Naive thymus-derived CD8-positive, alpha-beta T cell (primary cell): ENCODE measurements at regions of chr14 and their contacts with region 1.

Region 1: DNA sequence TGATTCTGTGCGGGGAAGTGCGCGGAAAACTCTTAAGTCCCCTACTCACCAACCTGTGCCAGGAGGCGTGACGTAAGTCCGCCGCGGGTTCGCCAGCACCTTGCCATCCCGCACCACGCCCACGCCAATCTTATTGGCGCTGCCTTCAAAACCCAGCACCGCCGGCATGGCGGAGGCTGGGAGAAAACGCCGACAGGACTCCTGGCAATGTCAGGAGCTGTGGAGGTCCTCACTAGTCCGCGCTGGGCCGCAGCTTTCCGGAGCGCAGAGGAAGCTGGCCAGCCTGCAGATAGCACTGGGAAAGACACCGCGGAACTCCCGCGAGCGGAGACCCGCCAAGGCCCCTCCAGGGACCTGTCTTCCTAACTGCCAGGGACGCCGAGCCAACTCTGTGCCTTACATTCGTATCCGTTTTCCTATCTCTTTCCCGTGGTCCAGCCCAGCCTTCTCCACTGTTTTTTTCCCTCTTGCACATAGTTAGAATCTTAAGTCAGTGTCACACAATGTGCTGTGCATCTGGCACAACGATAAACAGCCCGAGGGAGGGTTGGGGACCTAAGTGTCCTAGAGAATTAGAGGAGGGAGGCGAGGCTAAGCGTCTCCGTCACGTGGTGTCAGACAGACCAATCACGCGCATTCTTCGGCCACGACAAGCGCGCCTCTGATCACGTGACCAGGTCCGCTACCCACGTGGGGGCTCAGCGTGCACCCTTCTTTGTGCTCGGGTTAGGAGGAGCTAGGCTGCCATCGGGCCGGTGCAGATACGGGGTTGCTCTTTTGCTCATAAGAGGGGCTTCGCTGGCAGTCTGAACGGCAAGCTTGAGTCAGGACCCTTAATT is at the starts of genes APEX1 and OSGEP:
- DNase-seq: peak; percentile 87 to 99 (median 98)
- ATAC-seq: peak; percentile 82 to 83
- H3K4me3 Mint-ChIP-seq: peak within 1 kb of the TSS in 4 of 10 donors; percentile 4 to 30 (median 12)
- H3K27ac Mint-ChIP-seq: peak within 1 kb of the TSS in 2 of 10 donors; percentile 9 to 59
- H3K4me1 Mint-ChIP-seq: peaks cover 15 to 34% (median 26%) of the 10 kb centered on the region in 4 donors
- H3K27me3 Mint-ChIP-seq: no peaks in the 10 kb centered on the region
- polyA plus RNA-seq, gene APEX1: 125 to 176 (median 148) TPM
- polyA plus RNA-seq, gene OSGEP: 38.8 to 43.3 (median 42.0) TPM

Region 2: DNA sequence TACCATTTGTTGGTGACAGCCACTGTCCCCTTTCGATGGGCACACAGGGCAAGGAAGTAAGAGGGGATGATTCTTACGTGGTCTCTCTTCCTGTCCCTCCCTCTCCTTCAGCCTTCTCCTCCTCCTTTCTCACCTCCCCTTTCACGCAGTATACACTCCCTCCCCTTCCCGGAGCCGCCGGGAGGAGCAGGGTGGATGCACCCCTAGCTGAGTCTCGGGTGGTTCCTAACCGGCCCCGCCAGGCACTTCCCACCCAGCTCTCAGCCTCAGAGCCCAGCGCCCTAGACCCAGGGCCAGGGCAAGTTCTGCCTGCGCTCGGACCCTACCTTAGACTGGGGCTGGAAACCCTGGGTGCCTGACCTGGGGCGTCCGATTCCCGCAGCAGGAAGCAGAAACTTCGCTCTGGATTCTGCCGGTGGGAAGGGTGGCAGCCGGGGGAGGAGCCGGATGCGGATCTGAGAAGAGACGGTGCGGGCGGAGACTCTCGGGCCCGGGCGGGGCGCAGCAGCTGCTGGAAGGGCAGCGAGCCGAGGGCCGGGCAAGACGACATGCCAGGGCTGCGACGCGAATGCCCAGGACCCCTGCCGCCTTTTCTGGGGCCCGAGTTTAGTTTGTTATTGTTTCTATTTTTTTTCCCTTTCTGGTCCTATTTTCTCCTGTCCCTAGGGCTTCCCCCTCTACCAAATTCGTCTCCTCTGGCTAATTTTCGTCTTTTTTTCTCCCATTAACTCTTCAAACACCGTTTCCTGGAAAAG is 41.5 kb before region 1 on chr14 and contains the start of gene TEP1:
- POLR2A ChIA-PET with region 1: interaction called, 44 read pairs
- DNase-seq: peak; percentile 45 to 79 (median 64)
- ATAC-seq: peak; percentile 69 to 84
- H3K4me3 Mint-ChIP-seq: peak within 1 kb of the TSS; percentile 90 to 100 (median 96)
- H3K27ac Mint-ChIP-seq: peak within 1 kb of the TSS; percentile 84 to 99 (median 96)
- H3K4me1 Mint-ChIP-seq: peaks cover 22 to 63% (median 47%) of the 10 kb centered on the region in 4 donors
- H3K27me3 Mint-ChIP-seq: no peaks in the 10 kb centered on the region
- polyA plus RNA-seq, gene TEP1: 3.0 to 4.9 (median 4.5) TPM

Region 3: GRCh38 chr14:20427231-20428009 is 27.3 kb before region 1 on chr14:
- POLR2A ChIA-PET with region 1: interaction called, 23 read pairs
- DNase-seq: peak in 2 of 10 donors; percentile 21 to 32
- ATAC-seq: peak; percentile 38 to 62
- H3K4me3 Mint-ChIP-seq: peak overlapping the region; percentile 45 to 80 (median 79)
- H3K27ac Mint-ChIP-seq: peak overlapping the region; percentile 88 to 95 (median 93)
- H3K4me1 Mint-ChIP-seq: peaks cover 24 to 50% (median 46%) of the 10 kb centered on the region in 4 donors
- H3K27me3 Mint-ChIP-seq: no peaks in the 10 kb centered on the region

Region 4: GRCh38 chr14:20440882-20441281 is 13.9 kb before region 1 on chr14:
- POLR2A ChIA-PET with region 1: interaction called, 21 read pairs
- DNase-seq: peak in 9 of 10 donors; percentile 12 to 79 (median 47)
- ATAC-seq: peak; percentile 96 to 98
- H3K4me3 Mint-ChIP-seq: peak overlapping the region; percentile 70 to 87 (median 82)
- H3K27ac Mint-ChIP-seq: peak overlapping the region; percentile 88 to 98 (median 94)
- H3K4me1 Mint-ChIP-seq: peaks cover 22 to 44% (median 31%) of the 10 kb centered on the region in 4 donors
- H3K27me3 Mint-ChIP-seq: no peaks in the 10 kb centered on the region

Region 5: DNA sequence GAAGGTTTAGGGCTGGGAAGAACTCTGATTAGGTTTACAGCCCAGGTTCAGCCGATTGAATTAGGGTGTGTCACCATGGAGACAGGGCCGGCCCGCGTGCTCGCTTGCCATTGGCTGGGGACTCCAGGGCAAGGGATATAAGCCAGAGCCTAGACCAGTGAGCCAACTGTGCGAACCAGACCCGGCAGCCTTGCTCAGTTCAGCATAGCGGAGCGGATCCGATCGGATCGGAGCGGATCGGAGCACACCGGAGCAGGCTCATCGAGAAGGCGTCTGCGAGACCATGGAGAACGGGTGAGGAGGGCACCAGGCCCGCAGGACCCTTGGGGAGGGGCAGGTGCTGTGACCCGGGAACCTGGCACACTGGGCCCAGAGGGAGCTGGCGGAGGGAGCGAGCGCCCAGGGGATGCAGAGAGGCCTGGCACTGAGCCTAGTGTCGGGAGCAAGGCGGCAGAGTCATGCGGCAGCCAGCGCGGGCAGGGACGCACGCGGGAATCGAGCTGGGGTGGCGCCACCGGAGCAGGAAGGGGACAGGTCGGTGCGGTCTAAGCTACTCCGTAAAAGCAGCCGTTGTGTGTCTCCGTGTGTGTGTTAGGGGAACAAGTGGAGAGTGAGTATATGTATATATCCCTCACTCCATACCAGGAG is 14.6 kb after region 1 on chr14 and contains the start of gene PNP:
- POLR2A ChIA-PET with region 1: interaction called, 30 read pairs
- DNase-seq: peak; percentile 72 to 94 (median 85)
- ATAC-seq: peak; percentile 91 to 93
- H3K4me3 Mint-ChIP-seq: peak within 1 kb of the TSS; percentile 96 to 100 (median 100)
- H3K27ac Mint-ChIP-seq: peak within 1 kb of the TSS; percentile 89 to 100 (median 98)
- H3K4me1 Mint-ChIP-seq: peaks cover 32 to 52% (median 48%) of the 10 kb centered on the region in 4 donors
- H3K27me3 Mint-ChIP-seq: no peaks in the 10 kb centered on the region
- polyA plus RNA-seq, gene PNP: 32.2 to 57.9 (median 40.6) TPM

Region 6: DNA sequence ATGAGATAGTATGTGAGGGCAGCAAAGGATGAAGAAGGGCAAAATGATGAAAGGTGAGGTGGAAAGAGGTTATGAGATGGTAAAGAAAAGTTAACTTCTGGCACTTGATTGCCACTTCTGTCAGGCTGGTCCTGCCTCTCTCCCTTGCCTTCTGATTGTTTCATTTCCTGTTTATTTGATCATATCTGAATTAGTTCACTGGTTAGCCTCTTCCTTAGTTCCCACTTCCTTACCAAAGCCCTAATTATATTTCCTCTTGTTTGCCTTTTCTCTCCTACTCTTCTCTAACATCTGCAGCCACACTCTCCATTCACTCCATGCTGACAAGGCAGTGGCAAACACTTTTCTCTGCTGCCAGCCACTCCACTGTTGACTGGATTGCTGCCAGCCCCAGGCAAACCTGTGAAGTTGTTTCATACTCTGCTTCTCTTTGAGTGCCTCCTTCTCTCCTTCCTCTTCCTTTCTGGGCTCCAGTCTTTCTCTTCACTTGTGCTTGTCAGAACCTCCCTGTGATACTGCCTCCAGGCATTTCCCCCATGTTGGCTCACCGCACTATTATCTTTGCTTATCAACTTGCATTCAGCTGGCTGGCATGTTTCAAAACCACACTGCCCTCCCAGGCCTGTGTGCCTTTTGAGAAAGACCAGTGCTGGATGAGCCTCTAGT is 22.6 kb after region 1 on chr14:
- POLR2A ChIA-PET with region 1: interaction called, 13 read pairs
- DNase-seq: peak in 6 of 10 donors; percentile 20 to 63 (median 45)
- ATAC-seq: peak; percentile 76 to 83
- H3K4me3 Mint-ChIP-seq: peak overlapping the region; percentile 47 to 87 (median 72)
- H3K27ac Mint-ChIP-seq: peak overlapping the region; percentile 88 to 98 (median 92)
- H3K4me1 Mint-ChIP-seq: peaks cover 43 to 87% (median 85%) of the 10 kb centered on the region in 4 donors
- H3K27me3 Mint-ChIP-seq: no peaks in the 10 kb centered on the region